Lower leg skin (tissue), 4 donors: ENCODE measurements at regions of chr4 and their contacts with region 1.

Region 1: GRCh38 chr4:120049732-120050494 is 16.7 kb downstream of the MAD2L1 start:
- DNase-seq: peak; percentile 83 to 89
- H3K4me3 ChIP-seq: no peak overlapping the region
- CTCF ChIP-seq: peak in 1 of 3 donors; percentile 44
- POLR2A ChIP-seq: no peak

Region 2: GRCh38 chr4:119314356-119314755 is 735.6 kb before region 1 on chr4:
- intact Hi-C with region 1: loop called (anchors 10 kb)
- DNase-seq: no peak
- H3K4me3 ChIP-seq: no peak overlapping the region
- CTCF ChIP-seq: no peak
- POLR2A ChIP-seq: no peak

Region 3: DNA sequence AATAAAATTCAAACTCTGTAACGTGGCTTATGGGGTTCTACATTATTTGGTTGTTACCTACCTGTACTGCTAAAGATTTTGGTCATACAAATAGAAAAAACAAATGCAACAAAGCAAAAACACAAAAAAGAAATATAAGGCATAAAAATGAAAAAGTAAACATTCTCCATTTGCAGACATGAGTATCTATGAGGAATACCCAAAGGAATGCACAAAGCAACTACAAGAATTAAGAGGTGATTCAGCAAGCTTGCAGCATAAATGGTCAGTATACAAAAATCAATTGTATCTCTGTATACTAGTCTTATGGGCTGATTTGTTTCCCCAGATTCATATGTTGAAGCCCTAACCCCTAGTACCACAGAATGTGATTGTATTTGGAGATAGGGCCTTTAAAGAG is 417.7 kb before region 1 on chr4:
- intact Hi-C with region 1: loop called (anchors 10 kb)
- DNase-seq: no peak
- H3K4me3 ChIP-seq: no peak overlapping the region
- CTCF ChIP-seq: no peak
- POLR2A ChIP-seq: no peak

Region 4: DNA sequence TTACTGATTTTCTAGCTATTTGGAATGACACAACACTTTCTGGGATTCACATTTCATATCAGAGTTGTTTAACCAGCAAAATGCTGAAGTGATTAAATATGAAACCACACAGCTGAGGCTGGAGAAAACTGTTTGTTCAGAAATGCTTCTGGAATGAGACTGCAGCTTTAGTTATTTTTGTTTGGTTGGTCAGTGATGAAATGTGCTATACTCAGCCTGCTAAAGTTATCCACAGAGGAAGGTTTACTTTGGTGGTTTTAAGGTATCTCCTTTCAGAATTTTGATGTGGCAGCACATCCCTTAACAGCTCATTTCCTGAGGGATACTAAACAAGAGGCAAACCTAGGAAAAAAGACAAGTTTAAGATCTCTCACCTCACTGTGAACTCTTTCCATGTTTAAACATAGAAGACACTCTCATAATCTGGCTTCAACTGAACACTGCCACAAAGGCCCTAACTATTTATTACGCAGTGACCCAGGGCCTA is 314.7 kb before region 1 on chr4:
- intact Hi-C with region 1: no loop called
- DNase-seq: no peak
- H3K4me3 ChIP-seq: no peak overlapping the region
- CTCF ChIP-seq: no peak
- POLR2A ChIP-seq: no peak

Region 5: DNA sequence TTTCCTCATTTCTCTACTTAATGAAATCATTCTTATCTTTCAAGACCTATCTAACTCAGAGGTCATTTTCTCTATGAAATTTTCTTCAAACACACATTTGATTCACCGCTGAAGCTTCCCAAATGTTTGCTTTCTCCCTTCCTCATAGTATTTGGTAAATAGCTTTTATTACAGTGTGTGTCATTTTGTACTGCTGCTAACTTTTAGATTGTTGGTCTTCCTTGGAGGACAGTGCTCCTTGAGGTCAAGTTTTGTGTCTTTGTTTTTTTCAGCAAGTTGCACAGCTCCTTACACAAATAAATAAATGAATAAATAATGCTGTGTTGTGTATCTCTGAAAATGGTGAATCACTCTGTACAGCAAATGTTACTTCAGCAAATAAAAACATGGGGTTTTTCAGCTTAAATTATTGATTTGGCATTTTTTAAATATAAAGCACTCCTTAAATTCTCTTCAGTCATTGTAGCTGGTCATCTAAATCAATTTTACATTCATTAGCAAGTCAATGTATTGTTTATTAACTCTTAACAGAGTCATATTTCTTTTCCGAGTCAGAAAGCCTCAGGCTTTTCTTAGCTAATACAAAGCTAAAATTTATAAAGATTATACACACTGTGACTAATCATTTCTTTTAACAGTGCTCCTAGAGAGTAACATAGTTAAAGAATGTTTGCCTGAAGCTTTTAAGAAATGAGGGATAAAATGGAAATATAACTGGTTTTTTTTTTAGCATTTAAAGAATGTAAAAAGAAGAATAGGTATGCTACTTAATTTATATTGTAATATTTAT is 46.8 kb after region 1 on chr4:
- intact Hi-C with region 1: loop called (anchors 2 kb)
- DNase-seq: no peak
- H3K4me3 ChIP-seq: no peak overlapping the region
- CTCF ChIP-seq: no peak
- POLR2A ChIP-seq: no peak